ENCODE measurements at regions of chr5 and their contacts with region 1.

Region 1: GRCh38 chr5:132820162-132820754 is 7.2 kb downstream of the SOWAHA start:
- DNase-seq: peak; percentile 96
- H3K4me3 Mint-ChIP-seq: no peak overlapping the region
- H3K27ac Mint-ChIP-seq: no peak overlapping the region
- H3K4me1 Mint-ChIP-seq: peaks cover 8% of the 10 kb centered on the region
- H3K27me3 Mint-ChIP-seq: no peaks in the 10 kb centered on the region
- CTCF ChIP-seq: peak; percentile 97

Region 2: GRCh38 chr5:132446669-132447068 is 373.6 kb before region 1 on chr5:
- CTCF ChIA-PET with region 1: no interaction called
- POLR2A ChIA-PET with region 1: no interaction called
- intact Hi-C with region 1: no loop called
- DNase-seq: peak; percentile 96
- H3K4me3 Mint-ChIP-seq: no peak overlapping the region
- H3K27ac Mint-ChIP-seq: peak overlapping the region; percentile 34
- H3K4me1 Mint-ChIP-seq: peaks cover 51% of the 10 kb centered on the region
- H3K27me3 Mint-ChIP-seq: no peaks in the 10 kb centered on the region
- CTCF ChIP-seq: no peak

Region 3: DNA sequence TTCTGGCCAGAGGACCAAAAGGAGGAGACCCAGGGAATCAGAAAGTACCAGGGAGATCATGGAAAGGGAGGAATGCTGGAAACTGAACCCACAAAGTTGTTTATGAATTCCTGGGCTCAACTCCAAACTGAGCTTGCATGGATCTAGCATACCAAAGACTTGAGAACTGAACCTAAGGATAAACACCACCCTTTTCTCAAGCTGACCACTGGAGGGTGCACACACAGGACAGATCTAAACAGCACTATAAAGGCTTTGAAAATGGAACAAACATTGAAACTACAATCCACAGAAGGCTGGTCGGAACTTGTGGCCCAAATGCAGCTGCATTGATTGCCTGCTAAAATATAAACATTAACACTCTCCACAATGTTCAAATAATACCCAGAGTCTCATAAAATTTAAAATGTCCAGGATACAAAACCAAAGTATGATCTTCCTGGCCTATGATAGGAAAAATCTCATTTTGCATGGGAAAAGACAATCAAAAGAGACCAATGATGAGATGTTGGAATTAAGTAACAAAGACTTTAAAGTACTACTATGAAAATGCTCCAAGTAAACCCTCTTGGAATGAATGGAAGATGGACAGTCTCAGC is 314.1 kb before region 1 on chr5:
- CTCF ChIA-PET with region 1: interaction called, 13 read pairs
- POLR2A ChIA-PET with region 1: no interaction called
- intact Hi-C with region 1: loop called (anchors 5 kb)
- DNase-seq: peak; percentile 78
- H3K4me3 Mint-ChIP-seq: no peak overlapping the region
- H3K27ac Mint-ChIP-seq: no peak overlapping the region
- H3K4me1 Mint-ChIP-seq: peaks cover 23% of the 10 kb centered on the region
- H3K27me3 Mint-ChIP-seq: no peaks in the 10 kb centered on the region
- CTCF ChIP-seq: peak; percentile 47

Region 4: DNA sequence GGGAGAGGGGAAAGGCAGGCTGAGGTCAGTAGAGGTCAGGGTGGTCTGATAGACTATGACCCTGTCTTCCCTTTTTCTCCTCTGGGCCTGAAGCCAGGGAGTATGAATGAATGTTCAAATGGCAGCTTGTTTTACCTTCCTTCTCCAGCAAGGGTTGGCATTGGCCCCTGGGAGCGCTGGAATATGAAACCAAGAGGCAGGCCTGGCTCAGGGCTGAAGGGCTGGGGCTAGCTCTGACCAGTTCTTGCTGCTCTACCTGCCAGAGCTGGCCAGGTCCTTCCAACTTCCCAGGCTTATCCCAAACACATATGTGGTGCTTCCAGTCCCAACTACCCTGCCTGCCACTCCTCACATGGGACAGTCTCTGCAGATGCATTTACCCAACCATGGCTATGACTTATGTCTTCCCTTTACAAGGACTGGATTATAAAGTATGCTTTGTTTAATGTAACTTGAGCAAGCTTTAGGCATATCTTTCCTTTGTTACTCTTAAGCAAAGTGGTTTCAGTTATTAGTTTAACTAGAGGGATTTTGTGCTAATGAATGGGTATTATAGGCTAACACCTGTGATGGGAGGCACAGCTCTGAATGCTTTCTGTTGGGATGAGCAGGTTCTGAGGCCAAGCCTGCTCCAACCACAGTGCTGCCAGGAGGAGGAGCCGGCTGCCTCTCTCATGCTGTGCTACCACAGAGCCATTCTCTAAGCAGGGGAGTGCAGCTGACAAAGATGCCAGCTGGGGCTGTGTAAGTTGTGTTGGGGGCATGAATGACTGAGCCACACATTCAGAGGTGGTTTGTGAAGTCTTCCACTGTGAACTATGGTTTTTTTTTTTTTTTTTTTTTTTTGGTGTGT is 66.9 kb before region 1 on chr5:
- CTCF ChIA-PET with region 1: interaction called, 34 read pairs
- POLR2A ChIA-PET with region 1: no interaction called
- intact Hi-C with region 1: loop called (anchors 1 kb)
- DNase-seq: peak; percentile 37
- H3K4me3 Mint-ChIP-seq: no peak overlapping the region
- H3K27ac Mint-ChIP-seq: no peak overlapping the region
- H3K4me1 Mint-ChIP-seq: no peaks in the 10 kb centered on the region
- H3K27me3 Mint-ChIP-seq: no peaks in the 10 kb centered on the region
- CTCF ChIP-seq: peak; percentile 16

Region 5: DNA sequence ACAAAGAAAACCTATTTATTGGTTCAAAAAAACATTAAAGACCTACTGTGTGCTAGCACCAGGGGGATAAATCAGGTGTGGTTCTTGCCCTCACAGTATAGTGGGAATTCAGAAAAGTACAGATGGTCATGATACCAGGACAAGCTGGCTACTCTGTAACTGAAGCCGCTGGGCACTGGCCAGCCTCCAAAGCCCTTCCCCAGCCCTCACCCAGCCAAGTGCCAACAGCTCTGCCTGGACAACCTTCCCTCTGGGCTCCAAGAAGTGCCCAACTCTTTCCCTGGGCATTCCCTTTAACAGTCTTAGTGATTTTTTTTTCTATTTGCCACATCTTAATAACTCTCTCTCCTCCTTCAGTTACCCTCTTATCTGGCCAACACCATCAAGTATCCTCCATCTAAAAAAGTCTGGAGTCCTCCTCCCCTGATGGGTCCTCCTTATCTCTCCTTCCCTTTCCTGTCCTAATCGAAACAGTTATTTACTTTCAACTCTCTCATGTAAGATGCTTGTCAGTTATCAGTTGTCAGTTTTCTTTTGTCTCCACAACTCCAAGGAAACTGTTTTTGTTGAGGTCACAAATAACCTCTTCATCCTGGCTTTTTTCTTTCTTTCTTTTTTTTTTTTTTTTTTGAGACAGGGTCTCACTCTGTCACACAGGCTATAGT is 29.9 kb before region 1 on chr5:
- CTCF ChIA-PET with region 1: interaction called, 12 read pairs
- POLR2A ChIA-PET with region 1: no interaction called
- intact Hi-C with region 1: no loop called
- DNase-seq: no peak
- H3K4me3 Mint-ChIP-seq: no peak overlapping the region
- H3K27ac Mint-ChIP-seq: no peak overlapping the region
- H3K4me1 Mint-ChIP-seq: no peaks in the 10 kb centered on the region
- H3K27me3 Mint-ChIP-seq: no peaks in the 10 kb centered on the region
- CTCF ChIP-seq: no peak

Region 6: DNA sequence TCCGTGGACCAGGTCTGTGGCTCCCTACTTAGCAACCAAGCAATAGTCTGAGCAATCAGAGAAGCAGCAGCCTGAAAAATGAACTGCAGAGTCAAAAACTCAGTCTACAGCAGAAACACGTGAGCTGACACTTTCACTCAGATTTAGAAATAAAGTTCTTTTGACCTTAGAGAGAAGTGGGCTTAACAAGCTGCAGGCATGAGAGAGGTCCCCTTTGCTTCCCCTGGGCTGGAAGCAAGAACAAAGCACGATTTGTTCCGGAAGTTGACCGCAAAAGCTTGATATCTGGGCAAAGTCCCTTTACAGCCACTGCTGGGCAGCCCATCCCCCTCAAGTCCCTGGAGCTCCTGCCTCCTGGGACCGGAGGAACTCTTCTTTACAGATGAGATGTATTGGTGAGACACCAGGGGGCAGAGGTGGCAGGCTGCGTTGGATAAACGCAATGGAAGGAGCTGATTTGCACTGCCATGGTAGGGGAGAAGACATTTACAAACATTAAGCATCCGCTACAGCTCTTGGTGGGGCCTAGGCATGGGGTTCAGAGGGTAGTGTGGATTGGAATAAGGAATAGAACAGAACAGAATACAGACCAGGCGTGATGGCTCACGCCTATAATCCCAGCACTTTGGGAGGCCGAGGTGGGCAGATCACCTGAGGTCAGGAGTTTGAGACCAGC is 13.0 kb before region 1 on chr5:
- CTCF ChIA-PET with region 1: interaction called, 58 read pairs
- POLR2A ChIA-PET with region 1: no interaction called
- intact Hi-C with region 1: no loop called
- DNase-seq: no peak
- H3K4me3 Mint-ChIP-seq: no peak overlapping the region
- H3K27ac Mint-ChIP-seq: no peak overlapping the region
- H3K4me1 Mint-ChIP-seq: no peaks in the 10 kb centered on the region
- H3K27me3 Mint-ChIP-seq: peaks cover 23% of the 10 kb centered on the region
- CTCF ChIP-seq: no peak